ENCODE measurements at regions of chr11 and their contacts with region 1.

Region 1: GRCh38 chr11:65615229-65615941 is at the start of gene PCNX3:
- DNase-seq: peak; percentile 100
- H3K4me3 Mint-ChIP-seq: peak within 1 kb of the TSS; percentile 96
- H3K27ac Mint-ChIP-seq: peak within 1 kb of the TSS; percentile 98
- H3K4me1 Mint-ChIP-seq: peaks cover 43% of the 10 kb centered on the region
- H3K27me3 Mint-ChIP-seq: peaks cover 3% of the 10 kb centered on the region
- total RNA-seq, gene PCNX3: 29.8 to 32.1 TPM

Region 2: DNA sequence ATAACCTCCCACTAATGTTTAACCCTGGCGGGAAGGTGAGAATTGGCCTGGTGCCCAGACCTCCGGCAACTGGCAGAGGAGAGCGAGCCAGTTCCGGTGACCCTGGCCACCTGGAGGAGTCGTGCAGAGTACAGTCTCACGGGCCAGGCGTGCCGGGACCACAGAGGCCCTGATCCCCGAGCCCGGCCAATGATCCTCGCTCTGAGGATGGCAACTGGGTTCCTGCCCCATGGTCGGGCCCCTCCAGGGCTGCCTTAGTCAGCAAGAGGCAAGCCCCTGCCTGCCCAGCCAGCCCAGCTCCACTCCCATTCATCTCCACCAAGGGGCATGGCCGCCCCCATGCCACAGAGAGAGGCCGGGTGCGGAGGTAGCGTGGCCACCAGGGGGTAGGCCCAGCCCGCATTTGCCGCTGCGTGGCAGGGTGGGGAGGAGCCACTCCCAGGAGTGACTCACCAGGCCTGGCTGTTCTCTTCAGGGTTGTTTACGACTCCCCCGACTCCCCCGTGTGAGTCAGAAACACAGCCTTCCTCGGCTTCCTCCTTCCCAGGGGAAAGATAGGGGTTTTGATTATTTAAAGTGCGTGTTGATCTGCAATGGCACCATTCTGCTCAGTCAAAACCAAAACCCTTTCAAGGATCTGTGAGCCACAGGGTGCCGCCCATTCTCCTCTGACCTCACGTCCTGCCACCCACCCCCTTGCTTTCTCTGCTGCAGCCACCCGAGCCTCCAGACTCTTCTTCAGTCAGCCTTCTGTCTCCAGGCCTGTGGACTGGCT is 233.2 kb before region 1 on chr11 and contains the start of gene SLC25A45:
- CTCF ChIA-PET with region 1: no interaction called
- POLR2A ChIA-PET with region 1: no interaction called
- intact Hi-C with region 1: no loop called
- DNase-seq: peak; percentile 97
- H3K4me3 Mint-ChIP-seq: peak within 1 kb of the TSS; percentile 85
- H3K27ac Mint-ChIP-seq: peak within 1 kb of the TSS; percentile 97
- H3K4me1 Mint-ChIP-seq: peaks cover 41% of the 10 kb centered on the region
- H3K27me3 Mint-ChIP-seq: no peaks in the 10 kb centered on the region
- total RNA-seq, gene SLC25A45: 14.4 to 16.1 TPM

Region 3: GRCh38 chr11:65569973-65570918 is 45.1 kb before region 1 on chr11 and contains the start of gene ZNRD2:
- CTCF ChIA-PET with region 1: interaction called, 33 read pairs
- POLR2A ChIA-PET with region 1: interaction called, 24 read pairs
- intact Hi-C with region 1: loop called (anchors 1 kb)
- DNase-seq: peak; percentile 100
- H3K4me3 Mint-ChIP-seq: peak within 1 kb of the TSS; percentile 100
- H3K27ac Mint-ChIP-seq: peak within 1 kb of the TSS; percentile 95
- H3K4me1 Mint-ChIP-seq: peaks cover 62% of the 10 kb centered on the region
- H3K27me3 Mint-ChIP-seq: no peaks in the 10 kb centered on the region
- total RNA-seq, gene ZNRD2: 48.1 to 51.1 TPM

Region 4: GRCh38 chr11:65588199-65589054 is 27.0 kb before region 1 on chr11:
- CTCF ChIA-PET with region 1: interaction called, 22 read pairs
- POLR2A ChIA-PET with region 1: interaction called, 8 read pairs
- intact Hi-C with region 1: loop called (anchors 2 kb)
- DNase-seq: peak; percentile 90
- H3K4me3 Mint-ChIP-seq: peak overlapping the region; percentile 57
- H3K27ac Mint-ChIP-seq: peak overlapping the region; percentile 95
- H3K4me1 Mint-ChIP-seq: peaks cover 30% of the 10 kb centered on the region
- H3K27me3 Mint-ChIP-seq: no peaks in the 10 kb centered on the region

Region 5: DNA sequence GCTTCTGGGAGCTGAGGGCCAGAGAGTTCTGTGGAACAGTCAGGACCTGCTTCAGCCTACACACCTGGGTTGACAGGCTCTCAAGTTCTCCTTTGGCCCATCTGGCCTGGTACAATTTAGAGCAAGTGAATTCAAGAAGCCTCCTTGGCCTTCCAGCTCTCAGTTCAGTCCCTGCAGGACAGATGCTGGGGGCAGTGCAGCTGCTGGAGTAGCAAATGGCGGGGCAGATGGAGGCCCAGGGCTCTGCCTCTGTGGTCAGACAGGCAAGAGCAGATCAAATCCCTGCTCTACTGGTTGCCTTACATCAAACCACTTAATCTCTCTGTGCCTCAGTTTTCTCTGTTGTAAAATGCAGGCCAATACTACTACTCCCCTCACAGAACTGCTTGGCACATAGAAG is 11.1 kb before region 1 on chr11:
- CTCF ChIA-PET with region 1: interaction called, 3 read pairs
- POLR2A ChIA-PET with region 1: interaction called, 10 read pairs
- intact Hi-C with region 1: no loop called
- DNase-seq: no peak
- H3K4me3 Mint-ChIP-seq: no peak overlapping the region
- H3K27ac Mint-ChIP-seq: no peak overlapping the region
- H3K4me1 Mint-ChIP-seq: peaks cover 2% of the 10 kb centered on the region
- H3K27me3 Mint-ChIP-seq: no peaks in the 10 kb centered on the region

Region 6: DNA sequence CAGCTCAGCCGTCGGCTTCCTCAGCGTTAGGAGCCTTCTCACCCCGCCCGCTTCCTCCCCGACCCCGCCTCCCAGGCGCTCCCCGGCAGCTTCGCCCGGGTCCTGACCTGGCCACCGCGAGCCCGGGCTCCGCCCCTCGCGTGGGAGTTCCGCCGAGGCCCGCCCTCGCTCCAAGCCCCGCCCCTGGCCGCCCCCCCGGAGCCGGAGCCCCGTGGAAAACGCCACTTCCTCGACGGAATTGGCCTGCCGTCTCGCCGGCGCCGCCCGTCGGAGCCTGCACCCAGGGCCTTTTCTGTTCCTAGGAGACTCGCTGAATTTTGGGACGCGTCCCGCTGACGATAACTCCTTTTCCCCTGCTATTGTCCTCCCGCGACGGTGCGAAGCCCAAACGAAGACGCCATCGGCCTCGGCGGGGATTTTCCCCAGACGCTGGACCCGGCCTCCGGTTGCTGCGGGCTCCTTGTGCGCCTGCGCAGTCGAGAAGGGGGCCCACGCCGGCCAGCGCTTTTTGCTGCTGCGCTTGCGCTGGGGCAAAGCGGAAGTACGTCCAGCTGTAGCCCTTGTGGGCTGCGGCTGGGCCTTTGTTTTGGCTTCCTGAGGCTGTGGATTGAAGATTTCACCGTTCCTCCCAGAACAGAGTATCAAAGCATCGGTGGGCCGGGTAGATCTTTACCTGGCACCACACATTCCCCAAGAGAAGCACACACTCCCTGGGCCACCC is 37.3 kb after region 1 on chr11:
- CTCF ChIA-PET with region 1: no interaction called
- POLR2A ChIA-PET with region 1: interaction called, 15 read pairs
- intact Hi-C with region 1: loop called (anchors 1 kb)
- DNase-seq: peak; percentile 97
- H3K4me3 Mint-ChIP-seq: peak overlapping the region; percentile 77
- H3K27ac Mint-ChIP-seq: peak overlapping the region; percentile 93
- H3K4me1 Mint-ChIP-seq: peaks cover 51% of the 10 kb centered on the region
- H3K27me3 Mint-ChIP-seq: no peaks in the 10 kb centered on the region

Region 7: GRCh38 chr11:65711785-65712632 is 96.6 kb after region 1 on chr11 and contains the start of gene KAT5:
- CTCF ChIA-PET with region 1: interaction called, 3 read pairs
- POLR2A ChIA-PET with region 1: no interaction called
- intact Hi-C with region 1: loop called (anchors 1 kb)
- DNase-seq: peak; percentile 99
- H3K4me3 Mint-ChIP-seq: peak within 1 kb of the TSS; percentile 90
- H3K27ac Mint-ChIP-seq: peak within 1 kb of the TSS; percentile 97
- H3K4me1 Mint-ChIP-seq: peaks cover 27% of the 10 kb centered on the region
- H3K27me3 Mint-ChIP-seq: no peaks in the 10 kb centered on the region
- total RNA-seq, gene KAT5: 55.9 to 61.6 TPM

Region 8: DNA sequence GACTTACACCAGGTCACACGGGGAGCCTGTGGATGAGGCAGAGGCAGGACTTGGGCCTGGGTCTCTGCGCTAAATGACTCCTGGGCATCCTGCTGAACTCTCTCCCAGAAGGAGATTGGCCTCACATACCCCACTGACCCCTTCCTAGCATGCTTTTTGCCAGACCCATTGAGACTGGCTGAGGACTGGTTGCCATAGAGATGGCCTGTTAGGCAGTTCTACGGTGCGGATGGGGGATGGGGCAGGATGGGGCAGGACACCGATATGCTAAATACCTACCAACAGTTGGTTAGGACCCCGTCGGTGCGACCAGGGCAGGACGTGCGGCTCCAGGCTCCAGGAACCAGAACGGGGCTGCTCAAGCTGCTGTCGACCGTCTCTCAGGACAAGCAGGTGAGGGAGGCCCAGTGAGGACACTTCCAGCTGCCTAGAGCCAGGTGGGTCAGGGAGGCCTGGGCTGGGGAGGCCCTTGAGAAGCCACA is 330.1 kb after region 1 on chr11 and contains the start of gene TSGA10IP:
- CTCF ChIA-PET with region 1: no interaction called
- POLR2A ChIA-PET with region 1: no interaction called
- intact Hi-C with region 1: no loop called
- DNase-seq: no peak
- H3K4me3 Mint-ChIP-seq: no peak within 1 kb of the TSS
- H3K27ac Mint-ChIP-seq: no peak within 1 kb of the TSS
- H3K4me1 Mint-ChIP-seq: peaks cover 9% of the 10 kb centered on the region
- H3K27me3 Mint-ChIP-seq: no peaks in the 10 kb centered on the region
- total RNA-seq, gene TSGA10IP: not detected